HCT116 (cell line): ENCODE measurements at regions of chr18 and their contacts with region 1.

Region 1: DNA sequence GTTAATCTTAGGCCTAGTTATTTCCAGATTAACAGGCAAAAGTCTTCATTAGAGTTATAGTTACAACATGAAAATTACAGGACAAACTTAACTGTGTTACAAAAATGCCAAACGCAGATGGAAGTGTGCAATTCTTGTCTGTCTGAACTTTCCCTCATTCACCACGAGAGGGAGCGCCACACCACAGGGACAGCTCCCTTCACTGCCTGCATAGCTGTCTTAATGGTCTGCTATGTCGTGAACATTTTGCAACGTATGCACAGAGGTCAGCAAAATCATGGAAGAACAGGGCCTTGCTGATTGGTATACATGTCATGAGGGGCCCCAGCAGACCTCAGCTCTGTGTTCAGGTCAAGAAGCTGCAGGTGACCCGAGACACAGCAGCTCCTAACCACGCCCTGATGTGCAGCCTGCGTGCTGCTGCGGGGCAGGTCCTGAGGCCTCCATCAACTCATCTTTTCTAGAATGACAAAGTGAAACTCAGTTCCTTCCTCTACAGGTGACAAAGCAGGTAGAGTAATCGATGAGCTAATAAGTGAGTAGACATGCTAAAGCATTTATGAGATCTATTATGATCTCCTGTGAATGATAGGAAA is 78.8 kb upstream of the ATP8B1 start:
- DNase-seq: peak; percentile 62
- ATAC-seq: peak; percentile 98
- H3K4me3 ChIP-seq: no peak overlapping the region
- H3K27ac ChIP-seq: no peak overlapping the region
- H3K4me1 ChIP-seq: peaks cover 0 to 2% of the 10 kb centered on the region in 2 experiments; a peak in 1 of 4 replicates
- H3K27me3 ChIP-seq: no peaks in the 10 kb centered on the region
- CTCF ChIP-seq: peak; percentile 82 to 94 (median 90); a peak in 5 of 6 replicates
- POLR2A ChIP-seq: no peak
- RAD21 ChIP-seq: peak; percentile 94

Region 2: GRCh38 chr18:56541793-56542192 is 1340.1 kb before region 1 on chr18:
- CTCF ChIA-PET with region 1: no interaction called
- POLR2A ChIA-PET with region 1: no interaction called
- RAD21 ChIA-PET with region 1: no interaction called
- intact Hi-C with region 1: no loop called
- DNase-seq: no peak
- ATAC-seq: no peak
- H3K4me3 ChIP-seq: no peak overlapping the region
- H3K27ac ChIP-seq: no peak overlapping the region
- H3K4me1 ChIP-seq: no peaks in the 10 kb centered on the region
- H3K27me3 ChIP-seq: peaks cover 15% of the 10 kb centered on the region
- CTCF ChIP-seq: no peak
- POLR2A ChIP-seq: no peak
- RAD21 ChIP-seq: no peak

Region 3: DNA sequence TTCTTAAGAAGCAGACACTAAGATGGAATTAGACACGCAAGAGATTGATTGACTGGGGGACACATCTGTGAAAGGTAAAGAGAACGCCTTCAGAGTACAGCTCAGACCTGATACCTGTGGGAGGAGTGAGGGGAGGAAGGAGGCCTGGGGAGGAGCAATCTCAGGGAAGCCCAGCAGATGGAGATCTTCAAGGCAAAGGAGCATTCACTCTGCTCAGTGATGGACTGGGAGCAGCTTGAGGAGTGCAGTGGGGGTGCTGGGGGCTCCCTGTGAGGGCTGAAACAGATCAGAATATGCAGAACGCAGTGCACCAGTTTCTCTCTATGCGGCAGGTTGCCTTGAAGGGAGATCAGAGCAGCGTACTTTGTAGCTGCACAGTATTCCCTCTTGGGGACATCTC is 24.9 kb after region 1 on chr18:
- CTCF ChIA-PET with region 1: interaction called, 14 read pairs
- POLR2A ChIA-PET with region 1: no interaction called
- RAD21 ChIA-PET with region 1: no interaction called
- intact Hi-C with region 1: no loop called
- DNase-seq: no peak
- ATAC-seq: peak; percentile 75
- H3K4me3 ChIP-seq: no peak overlapping the region
- H3K27ac ChIP-seq: no peak overlapping the region
- H3K4me1 ChIP-seq: no peaks in the 10 kb centered on the region
- H3K27me3 ChIP-seq: no peaks in the 10 kb centered on the region
- CTCF ChIP-seq: peak in 2 of 3 experiments; percentile 26 to 36; a peak in 3 of 6 replicates
- POLR2A ChIP-seq: no peak
- RAD21 ChIP-seq: 0 out of 2 replicates have a peak, but pooled peaks have one; percentile 8

Region 4: GRCh38 chr18:58043491-58044379 is 161.8 kb after region 1 on chr18 and contains the start of gene NEDD4L:
- CTCF ChIA-PET with region 1: interaction called, 7 read pairs
- POLR2A ChIA-PET with region 1: no interaction called
- RAD21 ChIA-PET with region 1: no interaction called
- intact Hi-C with region 1: loop called (anchors 5 kb)
- DNase-seq: peak; percentile 68
- ATAC-seq: peak; percentile 81
- H3K4me3 ChIP-seq: peak within 1 kb of the TSS; percentile 80 to 81
- H3K27ac ChIP-seq: peak within 1 kb of the TSS; percentile 82
- H3K4me1 ChIP-seq: peaks cover 11 to 21% of the 10 kb centered on the region in 2 experiments; a peak in 3 of 4 replicates
- H3K27me3 ChIP-seq: no peaks in the 10 kb centered on the region
- CTCF ChIP-seq: peak; percentile 80 to 85 (median 85)
- POLR2A ChIP-seq: no peak
- RAD21 ChIP-seq: peak; percentile 93
- total RNA-seq, gene NEDD4L: 41.5 TPM

Region 5: DNA sequence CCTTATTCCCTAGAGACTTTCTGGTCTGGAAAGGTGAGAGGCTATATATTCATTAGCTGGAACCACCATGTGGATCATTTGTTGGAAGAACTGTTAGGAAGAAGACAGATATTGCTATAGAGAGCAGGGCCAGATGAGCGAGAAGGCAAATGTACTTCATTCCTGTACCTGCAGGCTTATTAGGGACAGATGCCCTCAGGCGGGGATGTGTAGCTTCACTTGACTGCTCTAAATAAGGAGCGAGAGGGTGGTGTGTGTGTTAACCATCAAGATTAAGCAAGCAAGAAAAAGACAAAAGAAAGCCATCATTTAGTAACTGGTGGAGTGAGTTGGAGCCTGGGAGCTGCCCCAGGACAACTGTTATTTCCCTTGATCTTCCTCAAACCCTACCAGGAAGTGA is 198.5 kb after region 1 on chr18:
- CTCF ChIA-PET with region 1: no interaction called
- POLR2A ChIA-PET with region 1: no interaction called
- RAD21 ChIA-PET with region 1: no interaction called
- intact Hi-C with region 1: no loop called
- DNase-seq: no peak
- ATAC-seq: no peak
- H3K4me3 ChIP-seq: no peak overlapping the region
- H3K27ac ChIP-seq: no peak overlapping the region
- H3K4me1 ChIP-seq: no peaks in the 10 kb centered on the region
- H3K27me3 ChIP-seq: no peaks in the 10 kb centered on the region
- CTCF ChIP-seq: no peak
- POLR2A ChIP-seq: no peak
- RAD21 ChIP-seq: no peak

Region 6: DNA sequence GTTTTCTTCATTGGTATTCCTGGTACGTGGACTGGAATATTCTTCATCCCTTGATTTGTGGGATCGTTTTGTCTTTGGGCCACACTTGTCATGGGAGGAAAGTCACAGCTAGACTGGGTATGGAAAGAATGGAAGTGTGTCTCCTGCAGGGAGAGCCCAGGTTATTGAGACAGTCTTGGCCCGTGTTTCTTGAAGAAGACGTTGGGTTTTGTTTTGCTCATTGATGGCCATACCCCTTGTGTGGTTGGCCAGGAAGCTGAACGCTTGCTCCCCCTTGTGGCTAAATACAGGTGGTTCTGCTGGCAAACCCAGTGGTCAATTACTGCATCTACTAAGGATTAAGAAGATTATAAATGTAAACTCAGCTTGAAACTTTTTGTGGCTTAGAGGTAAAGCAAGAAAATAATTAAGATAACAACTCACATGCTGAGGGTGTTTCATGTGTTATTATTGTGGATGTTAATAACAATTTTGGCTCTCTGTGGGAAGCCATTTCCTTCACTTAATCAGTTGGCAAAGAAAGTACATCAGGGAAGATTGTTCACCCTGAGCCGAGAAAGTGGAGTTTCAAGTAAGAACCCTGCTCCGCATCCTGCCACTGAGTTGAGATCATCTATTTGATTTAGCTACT is 253.9 kb after region 1 on chr18:
- CTCF ChIA-PET with region 1: interaction called, 21 read pairs
- POLR2A ChIA-PET with region 1: no interaction called
- RAD21 ChIA-PET with region 1: interaction called in 1 of 2 experiments, 3 read pairs
- intact Hi-C with region 1: loop called (anchors 1 kb)
- DNase-seq: peak; percentile 67
- ATAC-seq: peak; percentile 97
- H3K4me3 ChIP-seq: no peak overlapping the region
- H3K27ac ChIP-seq: no peak overlapping the region
- H3K4me1 ChIP-seq: peaks cover 0 to 5% of the 10 kb centered on the region in 2 experiments; a peak in 2 of 4 replicates
- H3K27me3 ChIP-seq: no peaks in the 10 kb centered on the region
- CTCF ChIP-seq: peak; percentile 78 to 97 (median 91); a peak in 5 of 6 replicates
- POLR2A ChIP-seq: no peak
- RAD21 ChIP-seq: peak; percentile 75

Region 7: GRCh38 chr18:58321986-58322385 is 440.1 kb after region 1 on chr18:
- CTCF ChIA-PET with region 1: interaction called, 3 read pairs
- POLR2A ChIA-PET with region 1: no interaction called
- RAD21 ChIA-PET with region 1: no interaction called
- intact Hi-C with region 1: loop called (anchors 5 kb)
- DNase-seq: peak; percentile 74
- ATAC-seq: peak; percentile 97
- H3K4me3 ChIP-seq: no peak overlapping the region
- H3K27ac ChIP-seq: no peak overlapping the region
- H3K4me1 ChIP-seq: peaks cover 13 to 30% of the 10 kb centered on the region in 2 experiments
- H3K27me3 ChIP-seq: no peaks in the 10 kb centered on the region
- CTCF ChIP-seq: peak; percentile 56 to 73 (median 62)
- POLR2A ChIP-seq: no peak
- RAD21 ChIP-seq: peak; percentile 94

Region 8: DNA sequence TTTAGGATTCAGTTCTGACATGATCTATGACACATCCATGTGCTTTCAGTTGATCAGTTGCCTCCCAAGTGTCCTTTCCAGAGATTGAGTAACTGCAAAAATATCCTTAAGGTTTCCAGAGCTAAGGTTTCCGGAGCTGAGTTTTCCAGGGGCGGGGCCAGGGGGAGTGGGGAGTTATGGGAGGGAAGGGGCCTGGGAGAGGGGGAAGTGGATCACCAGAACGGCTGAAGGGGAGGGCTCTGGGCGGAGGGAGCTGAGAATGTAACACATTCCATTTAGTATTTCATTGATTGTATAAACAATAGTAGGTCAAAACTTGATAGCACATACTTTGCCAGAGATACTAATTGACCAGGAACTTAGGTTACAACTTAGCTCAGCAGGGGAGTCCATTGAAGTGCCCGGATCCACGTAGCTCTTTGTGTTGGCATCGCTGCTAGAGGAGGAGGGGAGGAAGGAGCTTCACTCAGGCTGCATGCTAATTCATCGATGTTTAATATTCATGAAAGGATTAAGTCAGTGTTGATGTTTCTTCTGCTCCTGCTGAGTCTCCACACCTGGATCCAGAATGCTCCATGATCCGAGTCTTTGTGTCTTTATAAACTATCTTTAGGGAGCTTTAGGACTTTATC is 457.2 kb after region 1 on chr18:
- CTCF ChIA-PET with region 1: no interaction called
- POLR2A ChIA-PET with region 1: no interaction called
- RAD21 ChIA-PET with region 1: no interaction called
- intact Hi-C with region 1: no loop called
- DNase-seq: no peak
- ATAC-seq: no peak
- H3K4me3 ChIP-seq: no peak overlapping the region
- H3K27ac ChIP-seq: no peak overlapping the region
- H3K4me1 ChIP-seq: no peaks in the 10 kb centered on the region
- H3K27me3 ChIP-seq: no peaks in the 10 kb centered on the region
- CTCF ChIP-seq: no peak
- POLR2A ChIP-seq: no peak
- RAD21 ChIP-seq: no peak